CD8-positive, alpha-beta T cell (primary cell): ENCODE measurements at regions of chr1 and their contacts with region 1.

Region 1: GRCh38 chr1:160031365-160032164 is at the start of gene PIGM:
- DNase-seq: peak; percentile 78 to 96 (median 94)
- ATAC-seq: peak; percentile 98
- H3K4me3 ChIP-seq: peak within 1 kb of the TSS; percentile 68 to 90
- H3K4me3 Mint-ChIP-seq: peak within 1 kb of the TSS; percentile 98
- H3K27ac ChIP-seq: peak within 1 kb of the TSS; percentile 58
- H3K27ac Mint-ChIP-seq: peak within 1 kb of the TSS; percentile 93
- H3K4me1 ChIP-seq: peaks cover 23% of the 10 kb centered on the region
- H3K4me1 Mint-ChIP-seq: peaks cover 40% of the 10 kb centered on the region
- H3K27me3 ChIP-seq: no peaks in the 10 kb centered on the region
- H3K27me3 Mint-ChIP-seq: no peaks in the 10 kb centered on the region
- CTCF ChIP-seq: no peak
- total RNA-seq, gene PIGM: 1.4 to 1.6 TPM

Region 2: DNA sequence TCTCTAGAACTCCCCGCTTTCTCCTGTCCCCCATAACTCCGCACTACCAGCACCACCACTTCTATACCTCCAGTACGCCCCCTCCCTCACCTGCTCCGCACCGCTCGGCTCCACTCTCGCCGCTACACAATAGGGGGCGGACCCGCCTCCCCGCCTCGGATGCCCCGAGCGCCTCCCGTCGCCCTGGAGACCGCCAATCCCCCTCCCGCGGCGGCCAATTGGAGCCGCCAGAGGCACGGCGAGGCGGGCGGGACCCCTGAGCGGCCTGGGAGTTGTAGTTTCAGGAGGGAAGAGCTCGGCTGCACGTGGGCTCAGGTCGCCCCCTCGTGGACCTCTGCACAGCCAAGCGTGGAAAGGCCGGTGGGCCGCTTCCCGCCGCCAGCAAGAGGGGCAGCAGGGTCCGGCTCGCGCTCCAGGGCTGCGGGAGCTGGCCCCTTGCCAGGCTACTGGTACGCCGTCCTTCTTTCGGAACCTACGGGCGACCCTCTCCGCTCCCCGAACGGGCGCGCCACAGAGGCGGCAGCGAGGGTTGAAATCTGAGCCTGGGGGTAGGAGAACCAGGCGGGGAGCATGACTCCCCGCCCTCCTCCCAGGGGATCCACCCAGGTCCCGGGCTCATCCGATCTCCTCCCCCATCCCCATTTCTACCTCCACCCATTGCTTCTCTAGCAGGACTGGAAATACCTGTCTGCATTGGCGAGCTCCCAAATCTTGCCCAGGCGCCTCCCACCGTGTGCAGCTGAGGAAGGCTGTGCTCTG is 85.9 kb before region 1 on chr1 and contains the start of gene IGSF9:
- CTCF ChIA-PET with region 1: no interaction called
- POLR2A ChIA-PET with region 1: no interaction called
- intact Hi-C with region 1: loop called in 1 of 2 experiments (anchors 1 kb)
- DNase-seq: peak; percentile 67 to 92 (median 86)
- ATAC-seq: peak; percentile 97
- H3K4me3 ChIP-seq: peak within 1 kb of the TSS; percentile 13 to 32
- H3K4me3 Mint-ChIP-seq: peak within 1 kb of the TSS; percentile 68
- H3K27ac ChIP-seq: no peak within 1 kb of the TSS
- H3K27ac Mint-ChIP-seq: no peak within 1 kb of the TSS
- H3K4me1 ChIP-seq: peaks cover 12% of the 10 kb centered on the region
- H3K4me1 Mint-ChIP-seq: peaks cover 13% of the 10 kb centered on the region
- H3K27me3 ChIP-seq: peaks cover 5 to 16% of the 10 kb centered on the region in 2 experiments
- H3K27me3 Mint-ChIP-seq: peaks cover 26% of the 10 kb centered on the region
- CTCF ChIP-seq: peak; percentile 67
- total RNA-seq, gene IGSF9: not detected

Region 3: DNA sequence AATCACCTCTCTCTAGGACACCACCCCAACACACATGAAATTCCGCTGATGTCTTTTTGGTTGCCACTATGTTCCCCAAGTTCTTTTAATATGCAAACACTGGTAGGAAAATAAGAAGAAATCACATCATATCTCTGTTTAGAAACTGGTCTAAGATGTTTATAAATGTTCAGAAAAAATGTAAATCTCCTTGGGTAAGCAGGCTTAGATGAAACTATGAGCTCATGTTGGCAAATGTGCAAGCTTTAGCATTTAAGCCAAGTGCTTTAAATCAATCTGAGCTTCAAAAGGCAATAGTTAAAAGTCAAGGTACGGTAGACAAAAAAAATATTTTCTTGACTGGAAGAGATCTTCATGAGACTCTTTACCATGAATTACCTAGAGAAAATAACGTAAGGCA is 52.3 kb before region 1 on chr1:
- CTCF ChIA-PET with region 1: no interaction called
- POLR2A ChIA-PET with region 1: no interaction called
- intact Hi-C with region 1: no loop called
- DNase-seq: no peak
- ATAC-seq: no peak
- H3K4me3 ChIP-seq: no peak overlapping the region
- H3K4me3 Mint-ChIP-seq: no peak overlapping the region
- H3K27ac ChIP-seq: no peak overlapping the region
- H3K27ac Mint-ChIP-seq: no peak overlapping the region
- H3K4me1 ChIP-seq: no peaks in the 10 kb centered on the region
- H3K4me1 Mint-ChIP-seq: no peaks in the 10 kb centered on the region
- H3K27me3 ChIP-seq: no peaks in the 10 kb centered on the region
- H3K27me3 Mint-ChIP-seq: peaks cover 30% of the 10 kb centered on the region
- CTCF ChIP-seq: no peak

Region 4: DNA sequence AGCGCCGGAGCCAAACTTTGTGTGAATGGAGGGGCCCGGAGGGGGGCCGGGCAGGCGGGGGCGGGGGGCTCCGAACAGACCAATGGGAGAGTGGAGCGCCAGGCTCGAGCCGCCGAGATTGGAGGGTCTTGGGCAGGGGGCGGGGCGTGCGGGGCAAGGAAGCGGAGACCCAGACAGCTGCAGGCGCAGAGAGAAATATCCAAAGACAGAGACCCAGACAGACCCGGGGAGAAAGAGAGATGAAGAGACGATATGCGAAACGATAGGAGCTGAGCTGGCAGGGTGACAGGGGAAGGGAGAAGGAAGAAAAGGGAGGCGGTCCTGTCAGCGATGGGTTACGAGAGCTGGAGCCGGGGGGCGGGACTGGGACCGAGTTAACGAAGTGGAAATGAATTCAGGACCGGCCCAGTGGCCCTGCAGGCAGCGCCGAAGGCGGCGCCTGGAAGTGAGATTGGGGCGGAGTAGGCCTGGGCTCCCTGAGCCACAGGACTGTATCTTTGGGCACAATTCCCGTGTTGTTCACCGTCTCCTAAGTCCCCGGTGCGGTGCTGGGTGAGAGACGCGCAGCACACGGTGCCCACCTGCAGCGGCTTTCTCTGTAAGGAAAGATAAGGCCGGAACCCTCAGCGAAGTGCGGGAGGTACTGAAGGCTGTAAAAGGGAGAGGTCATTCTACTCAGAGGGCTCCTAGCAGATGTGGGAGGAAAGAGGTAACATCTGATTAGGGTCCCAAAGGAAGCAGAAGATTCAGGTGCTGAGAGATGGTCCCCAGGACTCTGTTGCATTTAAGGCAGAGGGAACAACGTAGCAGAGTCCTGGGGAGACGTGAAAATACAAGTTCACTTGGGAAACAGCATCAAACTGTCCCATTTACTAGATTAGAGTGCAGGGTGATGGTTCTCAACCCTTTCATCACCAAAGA is 38.9 kb after region 1 on chr1:
- CTCF ChIA-PET with region 1: no interaction called
- POLR2A ChIA-PET with region 1: no interaction called
- intact Hi-C with region 1: loop called in 1 of 2 experiments (anchors 1 kb)
- DNase-seq: peak; percentile 57 to 86 (median 83)
- ATAC-seq: peak; percentile 98
- H3K4me3 ChIP-seq: peak overlapping the region; percentile 50 to 53
- H3K4me3 Mint-ChIP-seq: peak overlapping the region; percentile 87
- H3K27ac ChIP-seq: no peak overlapping the region
- H3K27ac Mint-ChIP-seq: no peak overlapping the region
- H3K4me1 ChIP-seq: peaks cover 10% of the 10 kb centered on the region
- H3K4me1 Mint-ChIP-seq: peaks cover 10% of the 10 kb centered on the region
- H3K27me3 ChIP-seq: peaks cover 3 to 4% of the 10 kb centered on the region in 2 experiments
- H3K27me3 Mint-ChIP-seq: peaks cover 23% of the 10 kb centered on the region
- CTCF ChIP-seq: no peak

Region 5: GRCh38 chr1:160128194-160128523 is 96.6 kb after region 1 on chr1:
- CTCF ChIA-PET with region 1: no interaction called
- POLR2A ChIA-PET with region 1: no interaction called
- intact Hi-C with region 1: no loop called
- DNase-seq: no peak
- ATAC-seq: no peak
- H3K4me3 ChIP-seq: no peak overlapping the region
- H3K4me3 Mint-ChIP-seq: no peak overlapping the region
- H3K27ac ChIP-seq: no peak overlapping the region
- H3K27ac Mint-ChIP-seq: no peak overlapping the region
- H3K4me1 ChIP-seq: no peaks in the 10 kb centered on the region
- H3K4me1 Mint-ChIP-seq: no peaks in the 10 kb centered on the region
- H3K27me3 ChIP-seq: no peaks in the 10 kb centered on the region
- H3K27me3 Mint-ChIP-seq: peaks cover 8% of the 10 kb centered on the region
- CTCF ChIP-seq: no peak